ENCODE measurements at regions of chr9 and their contacts with region 1.

Region 1: GRCh38 chr9:120592210-120592609 is 12.2 kb upstream of the CDK5RAP2 start:
- DNase-seq: no peak

Region 2: GRCh38 chr9:120513825-120514396 is 78.3 kb before region 1 on chr9:
- intact Hi-C with region 1: no loop called
- DNase-seq: no peak

Region 3: DNA sequence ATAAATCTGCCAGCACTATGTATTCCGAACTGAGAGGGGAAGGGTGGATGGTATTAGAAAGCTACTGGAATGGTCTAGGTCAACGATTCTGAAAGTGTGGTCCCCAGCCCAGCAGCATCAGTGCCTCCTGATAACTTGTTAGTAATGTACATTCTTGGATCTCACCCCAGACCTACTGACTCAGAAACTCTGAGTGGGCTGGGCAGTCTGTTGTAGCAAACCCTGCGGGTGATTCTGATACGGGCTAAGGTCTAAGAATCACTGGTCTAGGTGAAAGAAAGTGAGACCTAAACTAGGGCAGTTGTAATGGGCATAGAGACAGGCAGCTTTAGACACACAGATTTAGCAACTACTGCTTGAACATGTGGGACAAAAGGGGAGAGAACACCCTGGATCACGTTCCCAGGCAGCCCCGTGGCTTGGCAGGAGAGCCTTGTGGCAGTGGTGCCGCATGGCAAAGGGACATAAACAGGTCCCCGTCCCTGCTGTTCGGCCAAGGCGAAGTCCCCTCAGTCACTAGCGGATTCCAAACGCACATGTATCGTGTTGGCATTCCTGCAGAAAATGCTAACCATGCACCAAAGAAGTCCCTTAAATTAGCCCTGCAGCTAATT is 1284.6 kb after region 1 on chr9:
- intact Hi-C with region 1: loop called in 1 of 2 experiments (anchors 5 kb)
- DNase-seq: no peak

Measured in posterior vena cava (tissue), 2 donors.